ENCODE measurements at regions of chr16 and their contacts with region 1.

Region 1: GRCh38 chr16:77236063-77236511 is 36.9 kb downstream of the SYCE1L start:
- DNase-seq: peak; percentile 93
- ATAC-seq: peak; percentile 97

Region 2: GRCh38 chr16:77584205-77584859 is 348.2 kb after region 1 on chr16:
- intact Hi-C with region 1: loop called (anchors 5 kb)
- DNase-seq: no peak
- ATAC-seq: peak; percentile 68